ENCODE measurements at regions of chr4 and their contacts with region 1.

Region 1: DNA sequence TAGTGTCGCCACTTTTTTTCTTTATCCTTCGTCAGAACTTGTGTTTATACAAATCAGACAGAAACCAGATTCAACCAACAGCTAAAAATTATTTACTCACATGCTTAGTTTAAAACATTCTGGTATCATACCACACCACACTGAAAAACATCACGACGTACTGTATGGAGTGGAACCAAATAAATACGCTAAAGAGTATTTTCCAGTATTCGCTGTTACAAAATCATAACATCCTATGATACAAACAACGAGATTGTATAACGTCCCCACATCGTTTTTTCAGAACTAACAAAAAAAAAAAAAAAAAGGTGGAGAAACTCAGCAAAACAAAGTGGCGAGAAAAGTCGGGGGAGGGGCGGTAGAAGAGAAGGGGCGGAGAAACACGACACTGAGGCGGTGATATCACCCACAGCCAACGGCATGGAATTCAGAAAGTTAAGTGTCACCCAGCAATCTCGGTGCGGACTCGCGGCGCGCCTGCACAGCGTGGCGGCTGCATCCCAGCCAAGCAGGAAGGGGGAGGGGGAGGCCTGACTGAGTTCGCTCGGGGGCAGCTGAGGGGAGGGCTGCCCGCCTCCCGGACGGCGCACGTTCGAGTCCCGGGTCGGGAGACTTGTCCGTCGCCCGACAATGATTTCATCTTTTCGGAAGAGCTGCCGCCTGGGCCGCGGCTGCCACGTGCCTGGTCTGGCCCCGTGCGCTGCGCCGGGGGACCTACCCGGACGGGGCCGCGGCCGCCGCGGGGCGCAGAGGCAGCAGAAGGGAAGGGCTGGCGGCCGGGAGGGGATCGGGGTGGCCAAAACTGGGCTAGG is 920 bp downstream of the SETD7 start:
- DNase-seq: peak; percentile 81
- H3K4me3 ChIP-seq: peak overlapping the region; percentile 77 to 91 (median 90)
- H3K27ac ChIP-seq: peak overlapping the region; percentile 63
- H3K4me1 ChIP-seq: peaks cover 17% of the 10 kb centered on the region
- H3K27me3 ChIP-seq: peaks cover 5% of the 10 kb centered on the region
- CTCF ChIP-seq: no peak

Region 2: GRCh38 chr4:139568206-139568955 is 13.3 kb after region 1 on chr4:
- CTCF ChIA-PET with region 1: no interaction called
- dilution Hi-C with region 1: no loop called
- in situ Hi-C with region 1: no loop called
- intact Hi-C with region 1: loop called (anchors 1 kb)
- DNase-seq: peak; percentile 70
- H3K4me3 ChIP-seq: no peak overlapping the region
- H3K27ac ChIP-seq: no peak overlapping the region
- H3K4me1 ChIP-seq: peaks cover 9% of the 10 kb centered on the region
- H3K27me3 ChIP-seq: no peaks in the 10 kb centered on the region
- CTCF ChIP-seq: no peak

Measured in mammary epithelial cell (primary cell).